ENCODE measurements at regions of chr17 and their contacts with region 1.

Region 1: GRCh38 chr17:28357061-28357900 is at the start of gene POLDIP2:
- DNase-seq: peak; percentile 93 to 97 (median 96)
- H3K4me3 ChIP-seq: peak within 1 kb of the TSS; percentile 60 to 98 (median 92)
- H3K27ac ChIP-seq: peak within 1 kb of the TSS; percentile 90 to 92
- H3K4me1 ChIP-seq: peaks cover 17 to 25% (median 21%) of the 10 kb centered on the region in 4 experiments
- H3K27me3 ChIP-seq: no peaks in the 10 kb centered on the region

Region 2: GRCh38 chr17:28193241-28193640 is 164.0 kb before region 1 on chr17:
- CTCF ChIA-PET with region 1: no interaction called
- POLR2A ChIA-PET with region 1: no interaction called
- DNase-seq: peak; percentile 34 to 74 (median 62)
- H3K4me3 ChIP-seq: peak overlapping the region in 1 of 7 experiments; percentile 29
- H3K27ac ChIP-seq: no peak overlapping the region
- H3K4me1 ChIP-seq: peaks cover 5 to 26% (median 16%) of the 10 kb centered on the region in 4 experiments
- H3K27me3 ChIP-seq: no peaks in the 10 kb centered on the region

Region 3: DNA sequence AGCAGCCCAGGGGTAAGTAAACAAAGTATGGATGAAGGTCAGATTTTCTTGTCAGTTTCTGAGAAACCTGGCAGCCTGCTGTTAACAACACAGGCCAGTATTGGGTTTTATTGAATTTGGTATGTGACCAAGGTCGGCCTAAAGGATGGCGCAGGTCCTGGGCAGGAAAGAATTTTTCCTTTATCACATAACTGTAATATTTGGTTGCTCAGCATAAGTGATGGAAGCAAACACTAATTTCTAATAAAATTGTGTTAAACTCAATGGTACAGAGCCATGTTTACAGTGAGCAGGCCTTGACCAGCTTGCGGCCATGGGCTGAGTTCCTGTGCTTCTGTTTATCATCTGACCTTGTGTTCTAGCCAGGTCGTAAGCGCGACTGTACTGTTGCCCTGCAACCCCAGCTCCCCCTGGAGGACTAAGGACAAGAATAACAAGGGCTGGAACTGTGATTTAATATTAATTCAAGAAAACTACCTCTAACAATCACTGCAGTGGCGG is 10.5 kb before region 1 on chr17:
- CTCF ChIA-PET with region 1: interaction called, 21 read pairs
- POLR2A ChIA-PET with region 1: interaction called, 3 read pairs
- DNase-seq: peak in 2 of 3 donors; percentile 18 to 19
- H3K4me3 ChIP-seq: no peak overlapping the region
- H3K27ac ChIP-seq: no peak overlapping the region
- H3K4me1 ChIP-seq: no peaks in the 10 kb centered on the region
- H3K27me3 ChIP-seq: no peaks in the 10 kb centered on the region

Region 4: GRCh38 chr17:28370038-28370743 is 12.9 kb after region 1 on chr17 and contains the start of gene VTN:
- CTCF ChIA-PET with region 1: interaction called, 27 read pairs
- POLR2A ChIA-PET with region 1: interaction called, 3 read pairs
- DNase-seq: peak in 2 of 3 donors; percentile 15
- H3K4me3 ChIP-seq: peak within 1 kb of the TSS in 5 of 7 experiments; percentile 4 to 83 (median 76)
- H3K27ac ChIP-seq: no peak within 1 kb of the TSS
- H3K4me1 ChIP-seq: peaks cover 0 to 22% (median 12%) of the 10 kb centered on the region in 4 experiments
- H3K27me3 ChIP-seq: peaks cover 0 to 14% (median 0%) of the 10 kb centered on the region in 5 experiments

Region 5: GRCh38 chr17:28390984-28391800 is 33.9 kb after region 1 on chr17:
- CTCF ChIA-PET with region 1: no interaction called
- POLR2A ChIA-PET with region 1: no interaction called
- DNase-seq: no peak
- H3K4me3 ChIP-seq: no peak overlapping the region
- H3K27ac ChIP-seq: no peak overlapping the region
- H3K4me1 ChIP-seq: no peaks in the 10 kb centered on the region
- H3K27me3 ChIP-seq: peaks cover 0 to 1% (median 0%) of the 10 kb centered on the region in 5 experiments